Activated naive CD4-positive, alpha-beta T cell treated with anti-CD3 and anti-CD28 coated beads for 36 hours (primary cell): ENCODE measurements at regions of chr12 and their contacts with region 1.

Region 1: GRCh38 chr12:118372541-118373495 is at the start of gene TAOK3:
- DNase-seq: peak; percentile 98
- H3K4me3 Mint-ChIP-seq: peak within 1 kb of the TSS; percentile 95
- H3K27ac Mint-ChIP-seq: peak within 1 kb of the TSS; percentile 89
- H3K4me1 Mint-ChIP-seq: peaks cover 40% of the 10 kb centered on the region
- H3K27me3 Mint-ChIP-seq: no peaks in the 10 kb centered on the region
- total RNA-seq, gene TAOK3: 49.1 to 49.2 TPM

Region 2: GRCh38 chr12:117190210-117190781 is 1182.5 kb before region 1 on chr12 and contains the start of gene FBXO21:
- CTCF ChIA-PET with region 1: no interaction called
- intact Hi-C with region 1: loop called (anchors 5 kb)
- DNase-seq: peak; percentile 91
- H3K4me3 Mint-ChIP-seq: peak within 1 kb of the TSS; percentile 90
- H3K27ac Mint-ChIP-seq: peak within 1 kb of the TSS; percentile 83
- H3K4me1 Mint-ChIP-seq: peaks cover 23% of the 10 kb centered on the region
- H3K27me3 Mint-ChIP-seq: no peaks in the 10 kb centered on the region
- total RNA-seq, gene FBXO21: 18.2 to 19.7 TPM

Region 3: GRCh38 chr12:118016424-118017264 is 356.2 kb before region 1 on chr12 and contains the start of gene RFC5:
- CTCF ChIA-PET with region 1: interaction called, 4 read pairs
- intact Hi-C with region 1: loop called (anchors 1 kb)
- DNase-seq: peak; percentile 98
- H3K4me3 Mint-ChIP-seq: peak within 1 kb of the TSS; percentile 96
- H3K27ac Mint-ChIP-seq: peak within 1 kb of the TSS; percentile 88
- H3K4me1 Mint-ChIP-seq: peaks cover 19% of the 10 kb centered on the region
- H3K27me3 Mint-ChIP-seq: no peaks in the 10 kb centered on the region
- total RNA-seq, gene RFC5: 62.0 to 62.5 TPM

Region 4: GRCh38 chr12:118120579-118121363 is 252.0 kb before region 1 on chr12:
- CTCF ChIA-PET with region 1: interaction called, 38 read pairs
- intact Hi-C with region 1: loop called (anchors 1 kb)
- DNase-seq: peak; percentile 80
- H3K4me3 Mint-ChIP-seq: no peak overlapping the region
- H3K27ac Mint-ChIP-seq: no peak overlapping the region
- H3K4me1 Mint-ChIP-seq: peaks cover 5% of the 10 kb centered on the region
- H3K27me3 Mint-ChIP-seq: no peaks in the 10 kb centered on the region

Region 5: DNA sequence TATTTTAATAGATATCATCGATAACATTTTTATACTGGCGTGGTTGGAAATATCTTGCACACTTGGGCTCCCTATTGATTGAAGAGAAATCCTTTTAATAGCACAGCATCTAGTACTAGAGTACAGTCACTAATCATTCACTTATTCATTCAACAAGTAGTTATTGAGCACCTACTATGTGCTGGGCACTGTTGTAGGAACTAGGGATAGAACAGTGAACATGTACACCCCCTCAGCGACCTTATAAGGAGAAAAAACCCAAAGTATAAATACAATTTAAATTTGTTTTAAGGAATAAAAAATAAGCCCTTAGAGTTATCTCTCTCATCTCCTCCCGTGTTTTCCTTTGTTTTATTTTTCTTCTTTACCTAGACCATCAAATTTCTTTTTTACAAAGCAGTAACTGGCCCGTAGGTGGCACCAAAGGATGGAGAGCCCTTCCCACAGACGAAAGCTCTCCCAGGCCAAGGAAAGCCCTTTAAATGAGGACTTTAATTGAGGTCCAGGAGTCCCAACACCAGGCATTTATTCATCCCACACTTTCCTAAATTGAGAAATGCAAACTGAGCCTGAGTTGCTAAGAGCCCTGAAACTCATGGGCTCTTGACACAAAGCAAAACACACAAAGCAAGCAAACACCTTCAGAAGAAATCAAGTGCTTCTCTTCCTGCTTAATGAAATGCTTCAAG is 207.9 kb before region 1 on chr12:
- CTCF ChIA-PET with region 1: interaction called, 18 read pairs
- intact Hi-C with region 1: loop called (anchors 5 kb)
- DNase-seq: peak; percentile 38
- H3K4me3 Mint-ChIP-seq: no peak overlapping the region
- H3K27ac Mint-ChIP-seq: no peak overlapping the region
- H3K4me1 Mint-ChIP-seq: peaks cover 27% of the 10 kb centered on the region
- H3K27me3 Mint-ChIP-seq: no peaks in the 10 kb centered on the region

Region 6: DNA sequence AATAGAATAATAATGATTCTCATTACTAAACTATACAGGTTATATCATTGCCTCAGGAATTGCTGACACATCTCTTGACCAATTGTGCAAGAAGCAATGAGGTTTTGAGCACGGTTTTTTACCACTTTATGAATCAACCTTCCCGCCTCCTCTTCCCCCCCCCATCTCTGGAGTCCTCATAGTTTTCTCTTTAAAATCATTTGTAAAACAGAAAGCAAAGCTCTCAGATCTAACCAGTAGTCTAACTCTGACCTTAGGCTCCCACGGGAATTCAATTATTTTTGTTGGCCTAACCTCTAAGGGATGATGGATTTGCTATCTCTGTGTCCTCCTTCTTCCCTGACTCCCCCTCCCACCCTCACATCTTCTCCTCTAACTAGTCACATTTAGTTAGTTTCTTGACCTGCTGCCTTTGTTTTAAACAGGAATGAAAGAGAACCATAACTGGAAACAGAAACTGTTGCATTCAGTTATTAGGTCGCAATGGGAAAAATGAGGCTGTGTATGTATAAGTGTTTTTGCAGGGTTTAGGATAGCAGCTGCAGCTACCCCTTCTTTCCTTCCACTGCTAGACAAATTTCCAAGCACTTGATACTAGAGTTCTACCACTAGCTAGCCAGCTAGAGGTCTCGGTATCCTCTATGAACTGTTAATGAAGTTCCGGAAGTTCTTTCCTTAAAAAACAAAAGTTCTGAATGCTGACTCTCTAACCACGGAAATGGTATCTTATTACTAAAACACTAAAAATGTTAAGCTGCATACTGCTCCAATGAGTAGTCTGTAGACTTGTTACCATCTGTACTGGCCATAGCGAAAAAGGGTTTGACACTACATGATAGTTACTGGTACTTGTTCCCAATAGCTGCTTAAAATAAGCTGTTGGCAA is 65.5 kb before region 1 on chr12:
- CTCF ChIA-PET with region 1: interaction called, 7 read pairs
- intact Hi-C with region 1: loop called (anchors 5 kb)
- DNase-seq: peak; percentile 66
- H3K4me3 Mint-ChIP-seq: peak overlapping the region; percentile 41
- H3K27ac Mint-ChIP-seq: peak overlapping the region; percentile 47
- H3K4me1 Mint-ChIP-seq: peaks cover 37% of the 10 kb centered on the region
- H3K27me3 Mint-ChIP-seq: no peaks in the 10 kb centered on the region

Region 7: GRCh38 chr12:118391424-118391823 is 18.6 kb after region 1 on chr12:
- CTCF ChIA-PET with region 1: interaction called, 24 read pairs
- intact Hi-C with region 1: no loop called
- DNase-seq: no peak
- H3K4me3 Mint-ChIP-seq: no peak overlapping the region
- H3K27ac Mint-ChIP-seq: no peak overlapping the region
- H3K4me1 Mint-ChIP-seq: no peaks in the 10 kb centered on the region
- H3K27me3 Mint-ChIP-seq: no peaks in the 10 kb centered on the region

Region 8: DNA sequence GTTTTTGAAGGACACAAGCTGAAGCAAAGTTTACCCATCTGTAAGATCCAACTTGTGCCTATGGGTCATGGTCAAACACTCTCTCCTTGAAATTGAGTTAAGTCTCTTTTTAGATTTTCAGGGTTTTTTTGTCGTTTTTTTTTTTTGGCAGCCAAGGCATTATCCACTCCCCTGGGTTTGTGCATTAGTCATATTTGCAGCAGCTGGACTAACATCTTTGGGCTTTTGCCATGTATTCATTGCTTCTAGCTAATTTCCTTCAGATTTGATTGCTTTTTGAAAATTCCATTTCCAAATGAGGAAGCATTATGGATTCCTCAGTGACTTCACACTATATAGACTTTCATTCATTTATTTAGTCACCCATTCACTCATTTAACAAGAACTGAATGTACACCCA is 528.2 kb after region 1 on chr12:
- CTCF ChIA-PET with region 1: no interaction called
- intact Hi-C with region 1: no loop called
- DNase-seq: no peak
- H3K4me3 Mint-ChIP-seq: no peak overlapping the region
- H3K27ac Mint-ChIP-seq: no peak overlapping the region
- H3K4me1 Mint-ChIP-seq: no peaks in the 10 kb centered on the region
- H3K27me3 Mint-ChIP-seq: no peaks in the 10 kb centered on the region